ENCODE measurements at regions of chr9 and their contacts with region 1.

Region 1: GRCh38 chr9:129746092-129746777 is 6.6 kb downstream of the PTGES start:
- DNase-seq: no peak
- H3K4me3 ChIP-seq: no peak overlapping the region
- H3K27ac ChIP-seq: no peak overlapping the region
- H3K4me1 ChIP-seq: no peaks in the 10 kb centered on the region
- H3K27me3 ChIP-seq: peaks cover 0 to 3% of the 10 kb centered on the region in 2 experiments
- CTCF ChIP-seq: no peak
- POLR2A ChIP-seq: no peak

Region 2: GRCh38 chr9:130156672-130157071 is 410.4 kb after region 1 on chr9:
- CTCF ChIA-PET with region 1: no interaction called
- POLR2A ChIA-PET with region 1: interaction called, 10 read pairs
- dilution Hi-C with region 1: no loop called
- intact Hi-C with region 1: no loop called
- DNase-seq: no peak
- H3K4me3 ChIP-seq: no peak overlapping the region
- H3K27ac ChIP-seq: no peak overlapping the region
- H3K4me1 ChIP-seq: no peaks in the 10 kb centered on the region
- H3K27me3 ChIP-seq: peaks cover 3 to 6% of the 10 kb centered on the region in 2 experiments
- CTCF ChIP-seq: peak in 1 of 2 donors; percentile 33
- POLR2A ChIP-seq: no peak